A673 (cell line): ENCODE measurements at regions of chr6 and their contacts with region 1.

Region 1: GRCh38 chr6:71621918-71622519 is 264.3 kb upstream of the RIMS1 start:
- DNase-seq: peak; percentile 46
- H3K4me3 ChIP-seq: no peak overlapping the region
- H3K27ac ChIP-seq: no peak overlapping the region
- H3K4me1 ChIP-seq: no peaks in the 10 kb centered on the region
- H3K27me3 ChIP-seq: no peaks in the 10 kb centered on the region
- CTCF ChIP-seq: peak; percentile 64

Region 2: DNA sequence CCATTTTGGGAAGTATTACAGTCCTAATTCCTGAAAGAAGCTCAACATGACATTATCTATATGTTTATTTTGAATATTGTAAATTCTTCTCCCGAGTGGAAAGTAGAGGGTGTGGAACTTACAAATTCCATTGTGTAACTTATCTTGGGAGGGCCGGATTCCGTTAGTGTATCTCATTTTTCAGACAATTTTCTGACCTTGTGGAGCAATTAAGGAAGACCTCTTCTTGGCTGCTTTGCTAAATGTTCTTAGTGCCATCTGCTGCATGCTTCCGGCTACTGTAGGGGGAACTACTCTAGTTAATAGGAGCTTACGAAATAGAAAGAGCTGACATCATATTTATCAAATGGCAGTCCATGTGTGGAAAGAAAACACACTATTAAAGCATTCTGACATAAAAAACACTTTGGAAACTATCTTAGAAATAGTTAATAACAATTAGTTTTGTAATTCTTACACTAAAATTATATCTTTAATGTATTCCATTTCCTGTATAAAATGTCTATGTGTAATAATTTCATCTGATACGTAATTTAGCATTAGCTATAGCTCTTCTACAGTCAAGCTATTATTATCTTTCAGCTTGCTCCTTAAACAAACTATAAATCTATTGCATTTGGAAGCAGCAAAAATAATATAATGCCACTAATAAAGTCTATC is 958.4 kb after region 1 on chr6:
- CTCF ChIA-PET with region 1: no interaction called
- POLR2A ChIA-PET with region 1: no interaction called
- intact Hi-C with region 1: loop called (anchors 5 kb)
- DNase-seq: peak; percentile 86
- H3K4me3 ChIP-seq: no peak overlapping the region
- H3K27ac ChIP-seq: no peak overlapping the region
- H3K4me1 ChIP-seq: no peaks in the 10 kb centered on the region
- H3K27me3 ChIP-seq: no peaks in the 10 kb centered on the region
- CTCF ChIP-seq: peak; percentile 74